Activated CD8-positive, alpha-beta memory T cell treated with anti-CD3 and anti-CD28 coated beads, Interleukin-2, amount 10 ng/mL, durations not matched to agents 7 days and 5 days (primary cell): ENCODE measurements at regions of chr3 and their contacts with region 1.

Region 1: GRCh38 chr3:141426404-141427034 is 58.2 kb downstream of the ZBTB38 start:
- DNase-seq: no peak
- ATAC-seq: no peak
- H3K4me3 Mint-ChIP-seq: no peak overlapping the region
- H3K27ac Mint-ChIP-seq: no peak overlapping the region
- H3K4me1 Mint-ChIP-seq: peaks cover 31% of the 10 kb centered on the region
- H3K27me3 Mint-ChIP-seq: no peaks in the 10 kb centered on the region

Region 2: DNA sequence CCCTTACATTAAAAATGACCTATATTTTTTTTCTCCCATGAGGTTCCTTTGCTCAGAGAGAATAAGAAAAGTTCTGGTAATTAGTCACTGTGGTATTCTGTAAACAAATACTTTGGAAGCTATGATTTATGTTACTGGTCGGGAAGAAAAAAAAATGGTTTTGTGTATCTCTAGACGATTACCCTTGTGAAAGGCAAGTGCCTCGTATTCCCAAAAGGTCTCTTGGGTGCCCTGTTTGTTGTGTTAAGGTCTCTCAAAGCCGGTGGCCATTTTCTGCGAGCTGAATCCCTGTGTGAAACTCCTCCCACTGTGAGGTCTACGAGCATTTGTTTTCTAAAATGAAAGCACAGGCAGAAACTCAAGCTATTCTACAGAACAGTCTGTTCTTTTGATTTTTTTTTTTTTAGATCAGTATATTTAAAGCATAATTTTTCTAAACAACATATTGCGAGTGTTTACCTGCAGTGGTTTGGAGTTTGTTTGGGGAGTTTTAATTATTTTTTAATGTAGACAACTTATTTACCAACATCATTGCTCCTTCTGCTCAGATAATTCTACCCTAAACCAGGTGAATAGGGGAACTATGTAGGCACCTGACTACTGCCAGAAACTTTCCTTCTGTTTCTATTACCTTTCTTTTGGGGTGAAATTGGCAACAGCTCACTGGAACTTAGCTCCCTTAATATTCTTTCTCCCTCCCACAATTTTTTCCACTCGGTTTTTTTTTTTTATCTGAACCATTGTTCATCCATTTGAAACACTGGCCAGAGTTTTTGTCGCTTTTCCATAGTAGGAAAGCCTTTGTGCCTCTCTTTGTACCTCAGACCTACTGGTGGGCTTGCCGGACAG is 14.2 kb before region 1 on chr3:
- CTCF ChIA-PET with region 1: interaction called, 11 read pairs
- DNase-seq: peak; percentile 78
- ATAC-seq: peak; percentile 43
- H3K4me3 Mint-ChIP-seq: peak overlapping the region; percentile 75
- H3K27ac Mint-ChIP-seq: peak overlapping the region; percentile 99
- H3K4me1 Mint-ChIP-seq: peaks cover 80% of the 10 kb centered on the region
- H3K27me3 Mint-ChIP-seq: no peaks in the 10 kb centered on the region